CD8-positive, alpha-beta T cell (primary cell): ENCODE measurements at regions of chr10 and their contacts with region 1.

Region 1: DNA sequence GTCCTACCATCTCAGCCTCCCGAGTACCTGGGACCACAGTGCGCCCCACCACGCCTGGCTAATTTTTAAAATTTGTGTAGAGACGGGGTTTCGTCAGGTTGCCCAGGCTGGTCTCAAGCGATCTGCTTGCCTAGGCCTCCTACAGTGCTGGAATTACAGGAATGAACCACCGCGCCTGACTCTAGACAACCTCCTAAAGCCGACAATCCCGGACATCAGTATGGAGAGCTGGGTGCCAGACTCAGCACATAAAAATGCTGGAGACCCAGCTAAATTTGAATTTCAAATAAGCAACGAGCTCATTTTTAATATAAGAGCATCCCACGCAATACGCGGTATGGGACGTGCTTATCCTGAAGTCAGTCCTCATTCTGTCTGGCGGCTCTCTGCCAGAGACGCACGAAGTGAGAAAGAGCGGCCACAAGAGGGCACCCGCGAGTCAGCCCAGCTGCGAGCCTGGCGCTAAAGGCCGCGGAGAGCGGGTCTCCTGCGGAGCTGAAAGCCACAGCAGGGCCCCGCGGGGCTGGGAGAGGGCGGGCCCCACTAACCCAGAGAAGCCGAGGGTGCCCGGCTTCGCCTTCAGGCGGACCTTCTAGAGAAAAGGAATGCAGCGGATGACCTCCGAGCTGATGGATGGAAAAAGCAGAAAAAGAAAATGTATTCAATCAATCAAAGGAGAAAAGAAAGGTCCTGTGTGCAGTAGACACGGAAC is 7.0 kb downstream of the CALY start:
- DNase-seq: peak; percentile 75 to 94 (median 89)
- ATAC-seq: peak; percentile 81
- H3K4me3 ChIP-seq: peak overlapping the region; percentile 4 to 6
- H3K4me3 Mint-ChIP-seq: no peak overlapping the region
- H3K27ac ChIP-seq: no peak overlapping the region
- H3K27ac Mint-ChIP-seq: no peak overlapping the region
- H3K4me1 ChIP-seq: peaks cover 13% of the 10 kb centered on the region
- H3K4me1 Mint-ChIP-seq: peaks cover 9% of the 10 kb centered on the region
- H3K27me3 ChIP-seq: peaks cover 23 to 33% of the 10 kb centered on the region in 2 experiments
- H3K27me3 Mint-ChIP-seq: peaks cover 28% of the 10 kb centered on the region
- CTCF ChIP-seq: peak; percentile 96

Region 2: DNA sequence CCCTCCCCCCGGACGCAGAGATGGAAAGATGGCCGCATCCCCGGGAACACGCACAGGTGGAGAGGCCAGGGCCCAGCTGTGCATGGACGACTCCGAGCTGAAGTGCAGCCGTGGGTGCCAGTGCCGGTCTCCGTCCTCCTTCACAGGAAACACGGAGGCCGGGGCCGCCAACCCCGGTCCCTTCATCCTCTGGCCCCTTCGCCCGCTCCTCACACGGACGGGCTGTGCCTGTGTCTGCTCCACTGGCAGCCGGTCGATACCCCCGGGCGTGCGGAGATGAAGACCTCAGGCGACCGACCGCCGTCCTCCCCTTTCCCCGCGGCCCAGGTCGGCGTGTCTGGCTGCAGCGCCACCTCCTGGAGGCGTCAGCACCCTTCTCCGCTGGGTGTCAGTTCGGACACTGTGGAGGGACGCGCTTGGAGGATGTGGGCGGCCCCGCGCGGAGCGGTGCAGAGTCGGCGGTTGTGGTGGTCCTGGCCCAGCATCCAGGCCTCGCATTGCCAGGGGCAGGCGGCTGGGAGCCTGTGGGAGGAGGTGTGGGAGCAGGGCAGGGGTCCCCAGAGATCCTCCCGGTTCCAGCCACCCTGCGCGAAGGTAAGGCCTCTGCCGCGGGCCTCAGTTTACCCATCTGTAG is 11.0 kb before region 1 on chr10:
- CTCF ChIA-PET with region 1: interaction called, 24 read pairs
- POLR2A ChIA-PET with region 1: no interaction called
- intact Hi-C with region 1: no loop called
- DNase-seq: peak; percentile 49 to 80 (median 70)
- ATAC-seq: peak; percentile 89
- H3K4me3 ChIP-seq: peak overlapping the region; percentile 50 to 60
- H3K4me3 Mint-ChIP-seq: peak overlapping the region; percentile 63
- H3K27ac ChIP-seq: no peak overlapping the region
- H3K27ac Mint-ChIP-seq: no peak overlapping the region
- H3K4me1 ChIP-seq: peaks cover 7% of the 10 kb centered on the region
- H3K4me1 Mint-ChIP-seq: peaks cover 11% of the 10 kb centered on the region
- H3K27me3 ChIP-seq: peaks cover 0 to 10% of the 10 kb centered on the region in 2 experiments
- H3K27me3 Mint-ChIP-seq: peaks cover 9% of the 10 kb centered on the region
- CTCF ChIP-seq: peak; percentile 80

Region 3: GRCh38 chr10:133520155-133520738 is 190.6 kb after region 1 on chr10:
- CTCF ChIA-PET with region 1: interaction called, 19 read pairs
- POLR2A ChIA-PET with region 1: no interaction called
- intact Hi-C with region 1: loop called (anchors 1 kb)
- DNase-seq: peak; percentile 78 to 97 (median 89)
- ATAC-seq: peak; percentile 99
- H3K4me3 ChIP-seq: peak overlapping the region; percentile 47 to 61
- H3K4me3 Mint-ChIP-seq: peak overlapping the region; percentile 63
- H3K27ac ChIP-seq: no peak overlapping the region
- H3K27ac Mint-ChIP-seq: peak overlapping the region; percentile 45
- H3K4me1 ChIP-seq: peaks cover 6% of the 10 kb centered on the region
- H3K4me1 Mint-ChIP-seq: peaks cover 13% of the 10 kb centered on the region
- H3K27me3 ChIP-seq: no peaks in the 10 kb centered on the region
- H3K27me3 Mint-ChIP-seq: peaks cover 3% of the 10 kb centered on the region
- CTCF ChIP-seq: peak; percentile 88